HepG2 (cell line): ENCODE measurements at regions of chr11 and their contacts with region 1.

Region 1: GRCh38 chr11:57249384-57250319 is 12.6 kb upstream of the APLNR start:
- DNase-seq: peak; percentile 23
- ATAC-seq: peak; percentile 76
- H3K4me3 ChIP-seq: no peak overlapping the region
- H3K27ac ChIP-seq: no peak overlapping the region
- H3K4me1 ChIP-seq: no peaks in the 10 kb centered on the region
- H3K27me3 ChIP-seq: no peaks in the 10 kb centered on the region
- CTCF ChIP-seq: peak; percentile 71
- EP300 ChIP-seq: no peak
- POLR2A ChIP-seq: no peak
- RAD21 ChIP-seq: no peak

Region 2: GRCh38 chr11:56988614-56989013 is 261.0 kb before region 1 on chr11 and contains the start of gene OR5AK2:
- CTCF ChIA-PET with region 1: no interaction called
- POLR2A ChIA-PET with region 1: no interaction called
- in situ Hi-C with region 1: no loop called
- intact Hi-C with region 1: loop called (anchors 1 kb)
- DNase-seq: no peak
- ATAC-seq: no peak
- H3K4me3 ChIP-seq: no peak within 1 kb of the TSS
- H3K27ac ChIP-seq: no peak within 1 kb of the TSS
- H3K4me1 ChIP-seq: no peaks in the 10 kb centered on the region
- H3K27me3 ChIP-seq: no peaks in the 10 kb centered on the region
- CTCF ChIP-seq: no peak
- EP300 ChIP-seq: no peak
- POLR2A ChIP-seq: no peak
- RAD21 ChIP-seq: no peak
- total RNA-seq, gene OR5AK2: not detected in 2 replicates

Region 3: DNA sequence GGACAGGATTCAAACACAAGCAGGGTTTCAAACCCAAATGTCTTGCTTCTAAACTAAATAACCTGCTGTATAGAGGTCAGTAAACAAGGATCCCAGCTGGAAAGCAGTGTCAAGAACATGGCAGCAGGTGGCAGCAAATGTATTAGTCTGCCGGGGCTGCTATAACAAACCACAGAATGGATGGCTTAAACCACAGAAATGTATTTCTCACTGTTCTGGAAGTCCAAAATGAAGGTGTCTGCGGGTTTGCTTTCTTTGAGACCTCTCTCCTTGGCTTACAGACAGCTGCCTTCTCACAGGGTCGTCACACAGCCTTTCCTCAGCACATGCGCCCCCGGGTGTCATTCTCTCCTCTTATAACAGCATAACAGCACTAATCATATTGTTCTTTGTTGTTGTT is 133.0 kb before region 1 on chr11:
- CTCF ChIA-PET with region 1: interaction called, 39 read pairs
- POLR2A ChIA-PET with region 1: no interaction called
- in situ Hi-C with region 1: loop called (anchors 5 kb)
- intact Hi-C with region 1: loop called (anchors 1 kb)
- DNase-seq: peak; percentile 25
- ATAC-seq: peak; percentile 90
- H3K4me3 ChIP-seq: no peak overlapping the region
- H3K27ac ChIP-seq: no peak overlapping the region
- H3K4me1 ChIP-seq: no peaks in the 10 kb centered on the region
- H3K27me3 ChIP-seq: no peaks in the 10 kb centered on the region; a peak in 1 of 5 replicates
- CTCF ChIP-seq: peak; percentile 68
- EP300 ChIP-seq: no peak
- POLR2A ChIP-seq: no peak
- RAD21 ChIP-seq: peak; percentile 29; the same call in 1 of the 2 replicates

Region 4: GRCh38 chr11:57131080-57131790 is 118.4 kb before region 1 on chr11:
- CTCF ChIA-PET with region 1: interaction called, 21 read pairs
- POLR2A ChIA-PET with region 1: no interaction called
- in situ Hi-C with region 1: no loop called
- intact Hi-C with region 1: loop called (anchors 1 kb)
- DNase-seq: peak; percentile 5
- ATAC-seq: peak; percentile 96
- H3K4me3 ChIP-seq: no peak overlapping the region
- H3K27ac ChIP-seq: no peak overlapping the region
- H3K4me1 ChIP-seq: no peaks in the 10 kb centered on the region
- H3K27me3 ChIP-seq: no peaks in the 10 kb centered on the region; a peak in 1 of 5 replicates
- CTCF ChIP-seq: peak; percentile 80
- EP300 ChIP-seq: no peak
- POLR2A ChIP-seq: no peak
- RAD21 ChIP-seq: no peak; the same call in 1 of the 2 replicates

Region 5: GRCh38 chr11:57230791-57231538 is 18.7 kb before region 1 on chr11:
- CTCF ChIA-PET with region 1: no interaction called
- POLR2A ChIA-PET with region 1: no interaction called
- in situ Hi-C with region 1: no loop called
- intact Hi-C with region 1: no loop called
- DNase-seq: no peak
- ATAC-seq: no peak
- H3K4me3 ChIP-seq: no peak overlapping the region
- H3K27ac ChIP-seq: no peak overlapping the region
- H3K4me1 ChIP-seq: no peaks in the 10 kb centered on the region
- H3K27me3 ChIP-seq: peaks cover 2 to 21% of the 10 kb centered on the region in 2 experiments; a peak in 3 of 5 replicates
- CTCF ChIP-seq: no peak
- EP300 ChIP-seq: no peak
- POLR2A ChIP-seq: no peak
- RAD21 ChIP-seq: no peak

Region 6: GRCh38 chr11:57277845-57278709 is 28.4 kb after region 1 on chr11:
- CTCF ChIA-PET with region 1: no interaction called
- POLR2A ChIA-PET with region 1: no interaction called
- in situ Hi-C with region 1: no loop called
- intact Hi-C with region 1: no loop called
- DNase-seq: peak; percentile 24
- ATAC-seq: peak; percentile 95
- H3K4me3 ChIP-seq: no peak overlapping the region
- H3K27ac ChIP-seq: no peak overlapping the region
- H3K4me1 ChIP-seq: 0 out of 2 replicates have a peak, but pooled peaks cover 5% of the 10 kb centered on the region
- H3K27me3 ChIP-seq: peaks cover 0 to 8% of the 10 kb centered on the region in 2 experiments; a peak in 2 of 5 replicates
- CTCF ChIP-seq: peak; percentile 79
- EP300 ChIP-seq: no peak
- POLR2A ChIP-seq: no peak
- RAD21 ChIP-seq: no peak